WTC11 (cell line): ENCODE measurements at regions of chr5 and their contacts with region 1.

Region 1: GRCh38 chr5:169795338-169795737 is 158.3 kb downstream of the DOCK2 start:
- DNase-seq: no peak
- ATAC-seq: peak; percentile 60
- H3K4me3 Mint-ChIP-seq: no peak overlapping the region
- H3K27ac Mint-ChIP-seq: no peak overlapping the region
- H3K4me1 Mint-ChIP-seq: peaks cover 26% of the 10 kb centered on the region
- H3K27me3 Mint-ChIP-seq: peaks cover 5% of the 10 kb centered on the region; the same call in 1 of the 2 replicates
- CTCF ChIP-seq: no peak

Region 2: DNA sequence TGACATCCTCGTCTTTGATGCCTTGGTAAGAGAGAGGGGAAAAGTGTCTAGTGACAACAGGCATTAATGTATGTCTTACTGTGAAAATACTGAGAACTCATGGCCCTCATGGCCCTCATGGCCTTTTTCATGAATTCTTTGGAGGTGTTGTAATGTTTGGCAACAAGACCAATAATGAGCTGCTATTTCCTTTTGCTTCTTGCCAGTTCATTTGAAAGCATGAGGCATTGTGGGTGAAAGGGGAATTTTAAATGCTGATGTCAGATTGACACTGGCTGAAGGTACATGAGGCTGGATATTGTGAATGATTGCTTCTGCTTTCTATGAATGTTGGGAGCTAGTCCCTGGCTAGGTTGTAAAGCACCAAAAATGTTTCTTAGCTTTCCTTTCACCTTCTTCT is 79.1 kb before region 1 on chr5:
- CTCF ChIA-PET with region 1: no interaction called
- POLR2A ChIA-PET with region 1: no interaction called
- DNase-seq: no peak
- ATAC-seq: no peak
- H3K4me3 Mint-ChIP-seq: no peak overlapping the region
- H3K27ac Mint-ChIP-seq: no peak overlapping the region
- H3K4me1 Mint-ChIP-seq: peaks cover 9% of the 10 kb centered on the region
- H3K27me3 Mint-ChIP-seq: no peaks in the 10 kb centered on the region
- CTCF ChIP-seq: no peak

Region 3: GRCh38 chr5:169826618-169827017 is 31.3 kb after region 1 on chr5:
- CTCF ChIA-PET with region 1: interaction called, 10 read pairs
- POLR2A ChIA-PET with region 1: no interaction called
- DNase-seq: peak; percentile 15
- ATAC-seq: peak; percentile 79
- H3K4me3 Mint-ChIP-seq: no peak overlapping the region
- H3K27ac Mint-ChIP-seq: no peak overlapping the region
- H3K4me1 Mint-ChIP-seq: peaks cover 7% of the 10 kb centered on the region
- H3K27me3 Mint-ChIP-seq: 0 out of 2 replicates have a peak, but pooled peaks cover under 1% of the 10 kb centered on the region
- CTCF ChIP-seq: no peak